CD4-positive, alpha-beta memory T cell (primary cell): ENCODE measurements at regions of chr10 and their contacts with region 1.

Region 1: GRCh38 chr10:43436400-43437140 is at the start of gene ZNF487:
- DNase-seq: peak; percentile 93 to 97 (median 94)
- H3K4me3 ChIP-seq: peak within 1 kb of the TSS; percentile 67 to 90
- H3K4me3 Mint-ChIP-seq: peak within 1 kb of the TSS; percentile 97 to 99 (median 97)
- H3K27ac ChIP-seq: peak within 1 kb of the TSS; percentile 96
- H3K27ac Mint-ChIP-seq: peak within 1 kb of the TSS; percentile 99 to 100 (median 99)
- H3K4me1 ChIP-seq: peaks cover 13% of the 10 kb centered on the region
- H3K4me1 Mint-ChIP-seq: peaks cover 15 to 28% (median 21%) of the 10 kb centered on the region in 4 donors
- H3K27me3 ChIP-seq: no peaks in the 10 kb centered on the region
- H3K27me3 Mint-ChIP-seq: no peaks in the 10 kb centered on the region
- total RNA-seq, gene ZNF487: 3.1 to 5.6 TPM

Region 2: DNA sequence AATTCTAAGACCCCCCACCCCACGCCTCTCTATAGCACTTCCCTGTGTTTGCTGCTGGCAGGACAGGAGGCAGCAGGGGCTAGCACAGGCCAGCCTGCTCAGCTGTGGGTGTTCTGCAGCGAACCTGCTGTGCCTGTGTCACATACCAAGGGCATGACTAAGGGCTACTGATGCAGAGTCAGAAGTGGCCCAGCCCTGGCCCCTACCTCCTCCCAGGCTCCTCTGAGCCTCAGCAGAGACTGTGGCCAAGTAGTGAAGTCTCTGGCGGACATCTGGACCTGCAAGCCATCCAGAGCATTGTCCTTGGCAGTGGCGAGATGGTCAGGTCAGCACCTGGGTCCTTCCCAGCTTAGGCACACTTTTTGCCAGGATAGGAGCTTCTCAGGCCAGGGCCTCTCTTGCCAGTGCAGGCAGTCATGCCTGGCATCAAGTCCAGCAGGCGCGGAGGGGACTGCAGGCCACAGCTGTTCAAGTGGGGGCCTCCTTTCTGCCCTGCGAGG is 476.0 kb before region 1 on chr10:
- CTCF ChIA-PET with region 1: no interaction called
- POLR2A ChIA-PET with region 1: no interaction called
- intact Hi-C with region 1: no loop called
- DNase-seq: no peak
- H3K4me3 ChIP-seq: no peak overlapping the region
- H3K4me3 Mint-ChIP-seq: no peak overlapping the region
- H3K27ac ChIP-seq: no peak overlapping the region
- H3K27ac Mint-ChIP-seq: peak overlapping the region in 1 of 7 donors; percentile 42
- H3K4me1 ChIP-seq: no peaks in the 10 kb centered on the region
- H3K4me1 Mint-ChIP-seq: no peaks in the 10 kb centered on the region
- H3K27me3 ChIP-seq: no peaks in the 10 kb centered on the region
- H3K27me3 Mint-ChIP-seq: peaks cover 0 to 1% of the 10 kb centered on the region in 2 donors

Region 3: GRCh38 chr10:43390759-43391158 is 45.8 kb before region 1 on chr10:
- CTCF ChIA-PET with region 1: interaction called, 10 read pairs
- POLR2A ChIA-PET with region 1: interaction called, 34 read pairs
- intact Hi-C with region 1: no loop called
- DNase-seq: peak in 4 of 5 donors; percentile 36 to 54 (median 42)
- H3K4me3 ChIP-seq: no peak overlapping the region
- H3K4me3 Mint-ChIP-seq: peak overlapping the region in 2 of 8 donors; percentile 3 to 6
- H3K27ac ChIP-seq: no peak overlapping the region
- H3K27ac Mint-ChIP-seq: peak overlapping the region; percentile 53 to 86 (median 80)
- H3K4me1 ChIP-seq: peaks cover 81% of the 10 kb centered on the region
- H3K4me1 Mint-ChIP-seq: peaks cover 63 to 94% (median 77%) of the 10 kb centered on the region in 4 donors
- H3K27me3 ChIP-seq: no peaks in the 10 kb centered on the region
- H3K27me3 Mint-ChIP-seq: no peaks in the 10 kb centered on the region

Region 4: DNA sequence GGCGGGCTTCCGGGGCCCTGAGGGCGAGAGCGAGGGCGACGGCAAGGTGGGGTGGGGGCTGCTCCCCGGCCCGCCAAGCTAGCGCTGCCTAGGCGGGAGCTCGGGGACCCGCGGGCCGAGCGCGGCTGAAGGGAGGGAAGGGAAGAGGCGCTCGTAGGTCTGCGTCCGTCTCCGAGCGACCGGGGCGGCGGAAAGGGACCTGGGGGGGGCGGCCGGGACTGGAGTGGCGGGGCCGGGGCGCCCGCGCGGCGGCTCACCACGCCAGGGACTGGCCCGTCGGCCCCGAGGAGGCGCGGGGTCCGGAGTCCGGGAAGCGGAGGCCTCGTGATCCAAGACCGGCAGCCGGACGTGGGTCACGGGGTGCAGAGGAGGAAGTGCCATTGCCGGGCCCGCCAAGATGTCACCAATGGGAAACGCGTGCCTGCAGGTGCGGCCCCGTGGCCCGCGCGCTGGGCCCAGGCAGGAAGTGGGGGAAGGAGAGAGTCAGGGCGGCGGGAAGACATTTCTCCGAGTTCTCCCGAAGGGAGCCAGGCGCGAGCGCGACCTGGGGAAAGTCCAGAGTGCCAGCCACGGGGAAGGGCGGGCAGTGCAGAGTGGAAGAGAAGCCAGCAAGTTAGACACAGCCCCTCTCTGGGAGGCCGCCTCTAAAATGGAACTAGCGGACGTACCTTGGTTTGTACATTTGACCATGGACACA is 39.5 kb before region 1 on chr10:
- CTCF ChIA-PET with region 1: interaction called, 3 read pairs
- POLR2A ChIA-PET with region 1: interaction called, 34 read pairs
- intact Hi-C with region 1: loop called (anchors 2 kb)
- DNase-seq: peak; percentile 67 to 82 (median 75)
- H3K4me3 ChIP-seq: peak overlapping the region; percentile 10 to 67
- H3K4me3 Mint-ChIP-seq: peak overlapping the region; percentile 79 to 100 (median 96)
- H3K27ac ChIP-seq: peak overlapping the region; percentile 100
- H3K27ac Mint-ChIP-seq: peak overlapping the region; percentile 93 to 99 (median 98)
- H3K4me1 ChIP-seq: peaks cover 81% of the 10 kb centered on the region
- H3K4me1 Mint-ChIP-seq: peaks cover 62 to 95% (median 73%) of the 10 kb centered on the region in 4 donors
- H3K27me3 ChIP-seq: no peaks in the 10 kb centered on the region
- H3K27me3 Mint-ChIP-seq: no peaks in the 10 kb centered on the region

Region 5: DNA sequence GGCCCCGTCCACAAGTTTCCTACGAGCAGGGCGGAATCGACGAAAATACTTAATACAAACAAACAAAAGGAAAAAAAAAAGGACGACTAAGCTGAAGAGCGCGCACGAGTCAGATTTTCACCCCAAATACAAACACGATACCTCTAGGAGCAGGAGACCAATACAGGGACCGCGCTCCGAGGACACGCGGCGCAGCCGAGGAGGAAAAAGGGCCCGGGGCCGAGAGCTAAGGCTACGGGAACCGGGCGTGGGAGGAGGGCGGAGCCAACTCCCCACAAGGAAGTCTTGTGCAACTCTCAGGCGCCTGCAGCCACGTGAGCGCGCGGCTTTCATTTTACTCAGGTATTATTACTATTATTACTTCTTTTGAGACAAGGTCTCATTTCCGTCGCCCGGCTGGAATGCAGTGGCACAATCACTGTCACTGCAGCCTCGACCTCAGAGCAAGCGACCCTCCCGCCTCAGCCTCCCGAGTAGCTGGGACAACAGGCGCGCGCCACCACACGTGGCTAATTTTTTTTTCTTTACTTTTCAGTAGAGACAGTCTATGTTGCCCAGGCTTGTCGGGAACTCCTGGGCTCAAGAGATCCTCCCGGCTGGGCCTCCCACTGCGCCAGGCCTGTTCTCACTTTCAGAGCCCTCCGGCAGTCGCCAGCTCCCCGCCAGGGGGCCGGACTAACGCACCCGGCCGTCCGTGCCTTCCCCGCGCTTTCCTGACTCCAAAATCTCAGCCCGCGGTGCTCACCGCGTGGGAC is 28.8 kb before region 1 on chr10:
- CTCF ChIA-PET with region 1: interaction called, 7 read pairs
- POLR2A ChIA-PET with region 1: interaction called, 60 read pairs
- intact Hi-C with region 1: loop called (anchors 1 kb)
- DNase-seq: peak; percentile 81 to 89 (median 84)
- H3K4me3 ChIP-seq: peak overlapping the region; percentile 83 to 85
- H3K4me3 Mint-ChIP-seq: peak overlapping the region; percentile 94 to 100 (median 98)
- H3K27ac ChIP-seq: peak overlapping the region; percentile 100
- H3K27ac Mint-ChIP-seq: peak overlapping the region; percentile 93 to 100 (median 99)
- H3K4me1 ChIP-seq: peaks cover 39% of the 10 kb centered on the region
- H3K4me1 Mint-ChIP-seq: peaks cover 18 to 53% (median 27%) of the 10 kb centered on the region in 4 donors
- H3K27me3 ChIP-seq: no peaks in the 10 kb centered on the region
- H3K27me3 Mint-ChIP-seq: no peaks in the 10 kb centered on the region

Region 6: GRCh38 chr10:43420369-43421200 is 16.0 kb before region 1 on chr10:
- CTCF ChIA-PET with region 1: interaction called, 10 read pairs
- POLR2A ChIA-PET with region 1: interaction called, 42 read pairs
- intact Hi-C with region 1: loop called (anchors 1 kb)
- DNase-seq: peak; percentile 82 to 90 (median 86)
- H3K4me3 ChIP-seq: peak overlapping the region; percentile 82 to 88
- H3K4me3 Mint-ChIP-seq: peak overlapping the region; percentile 85 to 93 (median 90)
- H3K27ac ChIP-seq: peak overlapping the region; percentile 82
- H3K27ac Mint-ChIP-seq: peak overlapping the region; percentile 89 to 98 (median 97)
- H3K4me1 ChIP-seq: peaks cover 36% of the 10 kb centered on the region
- H3K4me1 Mint-ChIP-seq: peaks cover 17 to 48% (median 31%) of the 10 kb centered on the region in 4 donors
- H3K27me3 ChIP-seq: no peaks in the 10 kb centered on the region
- H3K27me3 Mint-ChIP-seq: no peaks in the 10 kb centered on the region

Region 7: DNA sequence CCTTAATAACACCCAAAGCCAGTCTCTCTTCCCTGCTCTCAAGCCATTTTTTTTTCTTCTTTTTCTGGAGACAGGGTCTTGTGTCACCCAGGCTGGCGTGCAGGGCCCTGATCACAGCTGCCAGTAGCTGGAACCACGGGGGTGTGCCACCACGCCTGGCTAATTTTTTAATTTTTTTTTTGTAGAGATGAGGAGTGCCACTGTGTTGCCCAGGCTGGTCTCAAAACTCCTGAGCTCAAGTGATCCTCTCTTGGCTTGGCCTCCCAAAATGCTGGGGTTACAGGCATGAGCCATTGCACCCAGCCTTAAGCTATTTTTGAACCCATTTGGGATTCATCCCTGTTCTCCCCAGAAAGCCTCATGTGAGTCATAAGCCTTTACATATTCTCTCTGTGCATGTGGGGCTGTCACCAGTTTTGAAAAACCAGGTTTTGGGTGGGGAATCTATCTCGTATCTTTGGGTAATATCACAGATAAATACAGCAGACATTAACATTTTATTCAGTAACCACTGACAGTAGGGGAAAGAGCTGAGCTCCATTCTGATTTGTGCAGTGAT is 15.9 kb after region 1 on chr10:
- CTCF ChIA-PET with region 1: interaction called, 19 read pairs
- POLR2A ChIA-PET with region 1: interaction called, 11 read pairs
- intact Hi-C with region 1: loop called (anchors 1 kb)
- DNase-seq: no peak
- H3K4me3 ChIP-seq: peak overlapping the region in 1 of 2 donors; percentile 13
- H3K4me3 Mint-ChIP-seq: peak overlapping the region; percentile 70 to 88 (median 80)
- H3K27ac ChIP-seq: peak overlapping the region; percentile 54
- H3K27ac Mint-ChIP-seq: peak overlapping the region; percentile 92 to 97 (median 94)
- H3K4me1 ChIP-seq: peaks cover 52% of the 10 kb centered on the region
- H3K4me1 Mint-ChIP-seq: peaks cover 34 to 51% (median 44%) of the 10 kb centered on the region in 4 donors
- H3K27me3 ChIP-seq: no peaks in the 10 kb centered on the region
- H3K27me3 Mint-ChIP-seq: no peaks in the 10 kb centered on the region

Region 8: GRCh38 chr10:43491855-43492254 is 55.3 kb after region 1 on chr10:
- CTCF ChIA-PET with region 1: no interaction called
- POLR2A ChIA-PET with region 1: no interaction called
- intact Hi-C with region 1: no loop called
- DNase-seq: no peak
- H3K4me3 ChIP-seq: no peak overlapping the region
- H3K4me3 Mint-ChIP-seq: no peak overlapping the region
- H3K27ac ChIP-seq: no peak overlapping the region
- H3K27ac Mint-ChIP-seq: no peak overlapping the region
- H3K4me1 ChIP-seq: no peaks in the 10 kb centered on the region
- H3K4me1 Mint-ChIP-seq: no peaks in the 10 kb centered on the region
- H3K27me3 ChIP-seq: no peaks in the 10 kb centered on the region
- H3K27me3 Mint-ChIP-seq: no peaks in the 10 kb centered on the region

Region 9: GRCh38 chr10:43708262-43708661 is 271.7 kb after region 1 on chr10:
- CTCF ChIA-PET with region 1: no interaction called
- POLR2A ChIA-PET with region 1: no interaction called
- intact Hi-C with region 1: no loop called
- DNase-seq: no peak
- H3K4me3 ChIP-seq: no peak overlapping the region
- H3K4me3 Mint-ChIP-seq: no peak overlapping the region
- H3K27ac ChIP-seq: no peak overlapping the region
- H3K27ac Mint-ChIP-seq: no peak overlapping the region
- H3K4me1 ChIP-seq: no peaks in the 10 kb centered on the region
- H3K4me1 Mint-ChIP-seq: no peaks in the 10 kb centered on the region
- H3K27me3 ChIP-seq: no peaks in the 10 kb centered on the region
- H3K27me3 Mint-ChIP-seq: peaks cover 0 to 2% of the 10 kb centered on the region in 2 donors